Natural killer cell (primary cell): ENCODE measurements at regions of chr1 and their contacts with region 1.

Region 1: GRCh38 chr1:101238681-101239094 is 1.9 kb downstream of the S1PR1 start:
- DNase-seq: peak; percentile 83 to 89
- ATAC-seq: peak; percentile 57 to 78 (median 64)
- H3K4me3 ChIP-seq: peak overlapping the region; percentile 74
- H3K4me3 Mint-ChIP-seq: peak overlapping the region; percentile 98
- H3K27ac ChIP-seq: peak overlapping the region; percentile 60
- H3K27ac Mint-ChIP-seq: peak overlapping the region; percentile 91 to 96
- H3K4me1 ChIP-seq: peaks cover 43% of the 10 kb centered on the region
- H3K4me1 Mint-ChIP-seq: peaks cover 74 to 82% of the 10 kb centered on the region in 2 donors
- H3K27me3 ChIP-seq: no peaks in the 10 kb centered on the region
- H3K27me3 Mint-ChIP-seq: no peaks in the 10 kb centered on the region
- CTCF ChIP-seq: peak; percentile 91

Region 2: DNA sequence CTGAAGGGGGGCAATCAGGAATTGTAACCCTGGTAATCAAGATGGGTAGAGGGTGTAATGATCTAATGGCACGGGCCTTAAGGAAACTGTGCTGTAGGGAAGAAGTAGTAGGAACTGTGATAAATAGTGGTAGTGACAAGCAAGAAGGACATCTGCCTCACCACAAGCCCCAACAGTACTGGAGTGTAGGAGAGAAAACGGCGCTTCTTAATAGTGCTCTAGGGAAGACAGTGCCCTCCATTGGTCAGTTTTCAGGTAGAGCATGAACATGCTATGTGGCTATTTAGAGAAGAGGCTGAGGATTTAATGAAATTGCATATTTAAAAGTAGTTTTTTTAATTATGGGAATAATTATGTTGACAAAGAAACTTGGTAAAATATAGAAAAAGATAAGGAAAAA is 310.6 kb before region 1 on chr1:
- intact Hi-C with region 1: loop called (anchors 1 kb)
- DNase-seq: peak in 1 of 2 donors; percentile 63
- ATAC-seq: peak; percentile 45 to 56 (median 55)
- H3K4me3 ChIP-seq: no peak overlapping the region
- H3K4me3 Mint-ChIP-seq: no peak overlapping the region
- H3K27ac ChIP-seq: peak overlapping the region; percentile 72
- H3K27ac Mint-ChIP-seq: no peak overlapping the region
- H3K4me1 ChIP-seq: peaks cover 21% of the 10 kb centered on the region
- H3K4me1 Mint-ChIP-seq: peaks cover 30 to 40% of the 10 kb centered on the region in 2 donors
- H3K27me3 ChIP-seq: no peaks in the 10 kb centered on the region
- H3K27me3 Mint-ChIP-seq: no peaks in the 10 kb centered on the region
- CTCF ChIP-seq: no peak

Region 3: DNA sequence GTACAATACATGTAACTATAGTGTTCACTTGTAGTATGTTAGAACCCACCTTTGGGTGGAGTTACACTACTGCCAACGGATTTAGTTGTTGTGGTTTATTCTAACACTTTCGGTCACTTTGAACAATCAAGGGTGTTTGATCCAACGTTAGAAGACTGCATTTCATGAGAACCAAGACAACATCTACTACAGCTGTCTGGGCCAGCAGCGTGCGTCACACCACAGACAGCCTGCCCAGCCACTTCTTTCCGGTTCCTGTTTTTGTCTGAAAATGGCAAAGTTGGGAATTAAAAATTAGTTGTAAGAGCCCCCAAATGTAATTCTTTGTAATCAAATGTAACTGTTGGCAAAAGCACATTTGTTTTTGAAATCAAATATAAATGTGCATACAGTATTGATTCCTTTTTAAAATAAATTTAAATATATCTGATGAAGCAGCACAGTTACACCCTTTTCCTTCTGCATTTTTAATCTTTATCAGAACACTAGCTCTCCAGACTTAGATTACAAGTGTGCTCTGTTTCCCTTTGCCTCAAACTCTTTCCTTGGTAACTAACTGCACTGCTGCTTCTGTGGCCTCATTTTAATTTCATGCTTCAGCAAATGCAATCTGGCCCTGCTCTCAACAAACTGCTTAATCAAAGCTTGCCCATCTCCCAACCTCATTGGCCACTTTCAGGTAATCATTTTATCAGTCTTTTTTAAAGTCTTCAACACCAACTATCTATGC is 126.5 kb before region 1 on chr1:
- intact Hi-C with region 1: loop called (anchors 2 kb)
- DNase-seq: peak; percentile 46 to 93
- ATAC-seq: peak; percentile 93 to 96 (median 96)
- H3K4me3 ChIP-seq: no peak overlapping the region
- H3K4me3 Mint-ChIP-seq: peak overlapping the region; percentile 68
- H3K27ac ChIP-seq: peak overlapping the region; percentile 88
- H3K27ac Mint-ChIP-seq: peak overlapping the region; percentile 81 to 90
- H3K4me1 ChIP-seq: peaks cover 15% of the 10 kb centered on the region
- H3K4me1 Mint-ChIP-seq: peaks cover 34 to 43% of the 10 kb centered on the region in 2 donors
- H3K27me3 ChIP-seq: no peaks in the 10 kb centered on the region
- H3K27me3 Mint-ChIP-seq: no peaks in the 10 kb centered on the region
- CTCF ChIP-seq: no peak

Region 4: GRCh38 chr1:101282314-101283038 is 43.8 kb after region 1 on chr1:
- intact Hi-C with region 1: loop called (anchors 2 kb)
- DNase-seq: no peak
- ATAC-seq: no peak
- H3K4me3 ChIP-seq: no peak overlapping the region
- H3K4me3 Mint-ChIP-seq: peak overlapping the region; percentile 75
- H3K27ac ChIP-seq: peak overlapping the region; percentile 83
- H3K27ac Mint-ChIP-seq: peak overlapping the region; percentile 96 to 98
- H3K4me1 ChIP-seq: peaks cover 75% of the 10 kb centered on the region
- H3K4me1 Mint-ChIP-seq: peaks cover 91 to 93% of the 10 kb centered on the region in 2 donors
- H3K27me3 ChIP-seq: no peaks in the 10 kb centered on the region
- H3K27me3 Mint-ChIP-seq: no peaks in the 10 kb centered on the region
- CTCF ChIP-seq: no peak

Region 5: DNA sequence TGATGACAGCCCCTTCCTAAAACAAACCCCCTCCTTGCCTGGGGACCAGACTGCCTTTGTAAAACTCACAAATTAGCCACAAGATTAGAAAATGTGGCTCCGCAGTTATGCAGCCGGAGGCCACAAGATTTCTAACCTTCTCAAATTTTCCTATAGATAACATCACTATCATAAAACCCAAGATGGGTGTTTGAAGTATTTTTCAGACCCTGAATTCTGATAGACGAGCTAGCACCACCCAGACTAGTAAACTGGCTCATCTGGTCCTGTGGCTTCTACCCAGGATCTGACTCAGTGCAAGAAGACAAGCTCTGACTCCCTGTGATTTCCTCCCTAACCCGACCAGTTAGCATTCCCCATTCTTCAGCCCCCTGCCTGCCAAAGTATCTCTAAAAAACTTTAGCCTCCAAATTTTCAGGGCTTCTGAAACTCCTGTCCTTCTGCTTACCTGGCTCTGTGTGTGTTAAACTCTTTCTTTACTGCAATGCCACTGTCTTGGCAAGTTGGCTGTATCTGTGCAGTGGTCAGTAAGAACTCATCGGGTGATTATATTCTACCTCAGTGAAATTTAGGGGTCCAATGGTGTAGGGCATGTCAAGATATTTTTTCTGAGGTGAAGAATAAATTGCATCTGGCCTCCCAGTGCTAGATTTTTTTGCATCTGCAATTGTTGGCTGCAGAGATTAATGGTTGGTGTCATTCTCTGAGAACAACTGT is 100.2 kb after region 1 on chr1:
- intact Hi-C with region 1: loop called (anchors 5 kb)
- DNase-seq: peak; percentile 33 to 49
- ATAC-seq: peak; percentile 72 to 85 (median 84)
- H3K4me3 ChIP-seq: no peak overlapping the region
- H3K4me3 Mint-ChIP-seq: peak overlapping the region; percentile 78
- H3K27ac ChIP-seq: peak overlapping the region; percentile 47
- H3K27ac Mint-ChIP-seq: peak overlapping the region; percentile 91 to 92
- H3K4me1 ChIP-seq: peaks cover 20% of the 10 kb centered on the region
- H3K4me1 Mint-ChIP-seq: peaks cover 77 to 86% of the 10 kb centered on the region in 2 donors
- H3K27me3 ChIP-seq: no peaks in the 10 kb centered on the region
- H3K27me3 Mint-ChIP-seq: no peaks in the 10 kb centered on the region
- CTCF ChIP-seq: no peak